Heart right ventricle (tissue), 16 donors: ENCODE measurements at regions of chr3 and their contacts with region 1.

Region 1: DNA sequence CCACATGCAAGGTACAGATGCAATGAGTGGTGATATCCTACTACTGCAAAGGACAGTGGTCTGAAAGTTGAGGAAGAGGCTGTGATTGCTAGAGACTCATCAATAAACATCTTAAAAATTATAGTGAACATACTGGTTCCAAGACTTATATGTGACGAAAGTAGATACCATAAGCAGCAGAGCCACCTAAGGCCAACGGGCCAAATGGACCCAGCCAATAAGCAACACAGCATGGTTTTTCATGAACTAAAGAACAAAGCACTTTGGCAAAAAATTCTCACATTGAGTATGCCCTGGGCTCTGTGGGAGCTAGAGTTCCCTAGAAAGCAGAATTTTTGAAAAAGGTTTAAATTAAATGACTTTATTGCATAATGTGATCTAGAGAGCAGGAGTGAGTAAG is 272.1 kb downstream of the SI start:
- DNase-seq: no peak
- ATAC-seq: no peak
- H3K4me3 ChIP-seq: no peak overlapping the region
- H3K27ac ChIP-seq: no peak overlapping the region
- H3K4me1 ChIP-seq: no peaks in the 10 kb centered on the region
- H3K27me3 ChIP-seq: no peaks in the 10 kb centered on the region
- CTCF ChIP-seq: peak in 2 of 9 donors; percentile 22 to 35

Region 2: GRCh38 chr3:164748626-164749025 is 57.6 kb before region 1 on chr3:
- intact Hi-C with region 1: loop called in 1 of 10 experiments (anchors 10 kb)
- DNase-seq: no peak
- ATAC-seq: no peak
- H3K4me3 ChIP-seq: no peak overlapping the region
- H3K27ac ChIP-seq: no peak overlapping the region
- H3K4me1 ChIP-seq: no peaks in the 10 kb centered on the region
- H3K27me3 ChIP-seq: no peaks in the 10 kb centered on the region
- CTCF ChIP-seq: no peak

Region 3: DNA sequence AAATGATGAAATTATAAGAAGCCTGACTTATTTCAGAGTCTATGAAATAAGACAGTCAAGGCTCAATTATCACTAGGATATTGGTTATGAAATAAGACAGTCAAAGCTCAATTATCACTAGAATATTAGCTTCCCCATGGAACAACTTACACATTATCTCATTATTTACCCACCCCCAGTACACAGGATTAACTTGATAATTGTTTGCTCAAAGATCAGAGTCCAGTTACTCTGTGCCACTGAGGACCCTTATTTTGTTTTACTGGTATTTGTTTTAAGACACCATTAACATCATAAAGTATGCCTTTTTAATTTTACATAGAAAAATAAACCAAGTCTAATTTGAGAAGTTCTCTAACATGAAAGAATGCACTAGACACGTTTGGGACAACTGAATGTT is 46.7 kb after region 1 on chr3:
- intact Hi-C with region 1: no loop called
- DNase-seq: no peak
- ATAC-seq: no peak
- H3K4me3 ChIP-seq: no peak overlapping the region
- H3K27ac ChIP-seq: no peak overlapping the region
- H3K4me1 ChIP-seq: no peaks in the 10 kb centered on the region
- H3K27me3 ChIP-seq: no peaks in the 10 kb centered on the region
- CTCF ChIP-seq: no peak